Activated naive CD4-positive, alpha-beta T cell treated with anti-CD3 and anti-CD28 coated beads for 36 hours (primary cell): ENCODE measurements at regions of chr1 and their contacts with region 1.

Region 1: GRCh38 chr1:32650752-32651460 is at the start of gene RBBP4:
- DNase-seq: peak; percentile 98
- H3K4me3 Mint-ChIP-seq: peak within 1 kb of the TSS; percentile 97
- H3K27ac Mint-ChIP-seq: peak within 1 kb of the TSS; percentile 100
- H3K4me1 Mint-ChIP-seq: peaks cover 50% of the 10 kb centered on the region
- H3K27me3 Mint-ChIP-seq: no peaks in the 10 kb centered on the region
- total RNA-seq, gene RBBP4: 381 to 409 TPM

Region 2: GRCh38 chr1:32072622-32073298 is 578.1 kb before region 1 on chr1 and contains the start of gene TMEM39B:
- CTCF ChIA-PET with region 1: no interaction called
- intact Hi-C with region 1: loop called (anchors 2 kb)
- DNase-seq: peak; percentile 95
- H3K4me3 Mint-ChIP-seq: peak within 1 kb of the TSS; percentile 87
- H3K27ac Mint-ChIP-seq: peak within 1 kb of the TSS; percentile 85
- H3K4me1 Mint-ChIP-seq: peaks cover 32% of the 10 kb centered on the region
- H3K27me3 Mint-ChIP-seq: no peaks in the 10 kb centered on the region
- total RNA-seq, gene TMEM39B: 17.2 to 17.6 TPM

Region 3: DNA sequence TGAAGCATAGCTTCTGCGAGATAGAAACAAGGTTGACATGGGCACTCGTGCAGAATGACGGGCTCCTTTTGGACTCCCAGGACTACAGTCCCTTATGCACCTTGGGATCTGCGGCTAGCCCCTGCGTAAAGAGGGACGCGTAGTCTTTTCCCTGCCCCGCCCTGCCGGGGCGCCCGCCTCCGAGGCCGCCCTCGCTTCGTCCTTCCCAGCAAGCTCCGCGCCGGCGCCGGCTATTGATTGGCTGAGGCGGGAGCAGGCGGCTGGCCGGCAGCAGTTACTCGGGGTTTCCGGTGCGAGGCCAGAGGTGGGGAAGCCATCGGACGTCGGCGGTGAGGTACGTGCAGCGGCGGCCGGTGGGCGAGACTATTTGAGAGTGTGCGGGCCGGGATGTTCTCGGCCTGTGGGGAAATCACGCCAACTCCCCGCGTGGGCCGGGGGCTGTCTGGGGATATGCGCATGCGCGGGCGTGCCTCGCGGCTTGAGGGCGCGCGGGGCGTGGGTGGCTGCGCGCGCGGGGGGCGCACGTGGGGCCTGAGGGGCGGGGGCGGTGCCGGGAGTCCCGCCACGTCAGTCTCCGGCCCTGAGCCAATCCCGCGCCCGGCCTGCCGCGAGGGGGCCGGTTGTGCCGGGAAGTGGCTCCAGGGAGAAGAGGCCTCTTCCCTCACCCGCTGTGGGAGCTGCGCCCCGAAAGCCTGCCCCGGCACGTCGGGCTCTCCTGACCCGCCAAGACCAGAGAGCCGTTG is 471.3 kb before region 1 on chr1 and contains the start of gene TXLNA:
- CTCF ChIA-PET with region 1: no interaction called
- intact Hi-C with region 1: loop called (anchors 2 kb)
- DNase-seq: peak; percentile 94
- H3K4me3 Mint-ChIP-seq: peak within 1 kb of the TSS; percentile 86
- H3K27ac Mint-ChIP-seq: peak within 1 kb of the TSS; percentile 96
- H3K4me1 Mint-ChIP-seq: peaks cover 47% of the 10 kb centered on the region
- H3K27me3 Mint-ChIP-seq: no peaks in the 10 kb centered on the region
- total RNA-seq, gene TXLNA: 84.3 to 86.2 TPM

Region 4: GRCh38 chr1:32394141-32394889 is 256.6 kb before region 1 on chr1 and contains the start of gene BSDC1:
- CTCF ChIA-PET with region 1: no interaction called
- intact Hi-C with region 1: loop called (anchors 10 kb)
- DNase-seq: peak; percentile 100
- H3K4me3 Mint-ChIP-seq: peak within 1 kb of the TSS; percentile 100
- H3K27ac Mint-ChIP-seq: peak within 1 kb of the TSS; percentile 99
- H3K4me1 Mint-ChIP-seq: peaks cover 31% of the 10 kb centered on the region
- H3K27me3 Mint-ChIP-seq: no peaks in the 10 kb centered on the region
- total RNA-seq, gene BSDC1: 35.2 to 38.3 TPM

Region 5: DNA sequence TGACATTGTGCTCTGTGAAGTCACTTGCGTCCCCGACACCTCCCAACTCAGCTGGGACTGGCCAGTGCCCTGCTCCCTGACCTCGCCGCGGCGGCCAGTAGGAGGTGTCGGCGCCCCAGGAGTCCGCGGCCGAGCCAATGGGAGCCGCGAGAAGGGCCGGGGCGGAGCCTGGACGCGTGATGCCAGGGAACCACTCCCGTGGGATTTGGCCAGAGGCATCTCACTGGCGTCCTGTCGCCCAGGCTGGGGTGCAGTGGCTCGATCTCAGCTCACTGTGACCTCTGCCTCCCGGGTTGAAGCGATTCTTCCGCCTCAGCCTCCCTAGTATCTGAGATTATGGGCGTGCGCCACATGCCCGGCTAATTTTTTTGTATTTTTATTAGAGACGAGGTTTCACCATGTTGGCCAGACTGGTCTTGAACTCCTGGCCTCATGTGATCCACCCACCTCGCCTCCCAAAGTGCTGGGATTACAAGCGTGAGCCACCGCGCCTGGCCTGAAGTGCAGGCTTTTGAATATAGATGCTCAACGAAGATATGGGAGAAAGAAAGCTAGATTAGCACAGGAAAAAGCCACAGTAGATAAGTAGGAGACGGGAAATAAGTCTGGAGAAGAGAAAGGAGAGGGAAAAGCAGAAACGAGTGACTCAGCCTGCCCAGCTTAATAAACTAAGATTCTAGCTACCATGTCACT is 38.6 kb before region 1 on chr1:
- CTCF ChIA-PET with region 1: no interaction called
- intact Hi-C with region 1: loop called (anchors 2 kb)
- DNase-seq: peak; percentile 70
- H3K4me3 Mint-ChIP-seq: peak overlapping the region; percentile 70
- H3K27ac Mint-ChIP-seq: no peak overlapping the region
- H3K4me1 Mint-ChIP-seq: peaks cover 5% of the 10 kb centered on the region
- H3K27me3 Mint-ChIP-seq: no peaks in the 10 kb centered on the region

Region 6: GRCh38 chr1:32684167-32684811 is 33.4 kb after region 1 on chr1:
- CTCF ChIA-PET with region 1: no interaction called
- intact Hi-C with region 1: loop called (anchors 1 kb)
- DNase-seq: no peak
- H3K4me3 Mint-ChIP-seq: no peak overlapping the region
- H3K27ac Mint-ChIP-seq: peak overlapping the region; percentile 76
- H3K4me1 Mint-ChIP-seq: peaks cover 15% of the 10 kb centered on the region
- H3K27me3 Mint-ChIP-seq: no peaks in the 10 kb centered on the region

Region 7: DNA sequence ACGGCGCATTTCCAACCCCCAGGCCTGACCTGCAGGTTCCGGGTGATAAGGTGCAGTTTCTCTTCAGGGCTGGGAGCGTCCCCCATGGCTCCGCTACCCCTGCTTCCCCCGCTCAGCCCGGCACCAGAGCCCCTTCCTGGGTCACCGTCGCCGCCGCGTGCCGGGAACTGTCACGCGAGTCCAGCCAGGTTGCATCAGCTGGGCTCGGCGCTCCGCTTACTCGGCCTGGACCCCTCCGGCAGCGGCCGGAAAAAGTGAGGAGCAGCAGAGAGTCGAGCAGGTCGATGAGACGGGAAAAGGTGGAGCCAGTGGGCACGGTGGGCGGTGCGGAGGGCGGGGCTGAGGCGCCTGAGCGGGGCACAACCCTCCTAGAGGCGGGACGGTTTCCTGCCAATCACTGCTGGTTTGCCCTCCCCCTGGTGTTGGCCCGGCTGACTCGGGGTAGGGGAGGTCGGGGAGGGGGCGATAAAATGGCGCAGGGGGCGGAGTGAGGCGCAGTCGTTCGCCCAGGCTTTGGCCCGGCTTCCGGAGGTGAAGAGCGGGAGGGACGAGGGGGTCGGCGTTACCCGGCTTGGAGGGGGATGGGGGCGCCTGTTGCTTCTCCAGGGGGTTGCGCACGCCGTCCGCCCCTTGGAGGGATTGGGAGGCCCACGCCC is 166.4 kb after region 1 on chr1 and contains the starts of genes S100PBP and YARS1:
- CTCF ChIA-PET with region 1: no interaction called
- intact Hi-C with region 1: loop called (anchors 1 kb)
- DNase-seq: peak; percentile 100
- H3K4me3 Mint-ChIP-seq: peak within 1 kb of the TSS; percentile 92
- H3K27ac Mint-ChIP-seq: peak within 1 kb of the TSS; percentile 94
- H3K4me1 Mint-ChIP-seq: peaks cover 51% of the 10 kb centered on the region
- H3K27me3 Mint-ChIP-seq: no peaks in the 10 kb centered on the region
- total RNA-seq, gene S100PBP: 26.1 to 31.2 TPM
- total RNA-seq, gene YARS1: 293 to 312 TPM

Region 8: GRCh38 chr1:33384040-33384812 is 733.3 kb after region 1 on chr1:
- CTCF ChIA-PET with region 1: no interaction called
- intact Hi-C with region 1: no loop called
- DNase-seq: no peak
- H3K4me3 Mint-ChIP-seq: no peak overlapping the region
- H3K27ac Mint-ChIP-seq: no peak overlapping the region
- H3K4me1 Mint-ChIP-seq: peaks cover 13% of the 10 kb centered on the region
- H3K27me3 Mint-ChIP-seq: peaks cover 5% of the 10 kb centered on the region